Activated CD4-positive, alpha-beta memory T cell treated with anti-CD3 and anti-CD28 coated beads, Interleukin-2, amount 10 ng/mL, durations not matched to agents 7 days and 5 days (primary cell): ENCODE measurements at regions of chr5 and their contacts with region 1.

Region 1: DNA sequence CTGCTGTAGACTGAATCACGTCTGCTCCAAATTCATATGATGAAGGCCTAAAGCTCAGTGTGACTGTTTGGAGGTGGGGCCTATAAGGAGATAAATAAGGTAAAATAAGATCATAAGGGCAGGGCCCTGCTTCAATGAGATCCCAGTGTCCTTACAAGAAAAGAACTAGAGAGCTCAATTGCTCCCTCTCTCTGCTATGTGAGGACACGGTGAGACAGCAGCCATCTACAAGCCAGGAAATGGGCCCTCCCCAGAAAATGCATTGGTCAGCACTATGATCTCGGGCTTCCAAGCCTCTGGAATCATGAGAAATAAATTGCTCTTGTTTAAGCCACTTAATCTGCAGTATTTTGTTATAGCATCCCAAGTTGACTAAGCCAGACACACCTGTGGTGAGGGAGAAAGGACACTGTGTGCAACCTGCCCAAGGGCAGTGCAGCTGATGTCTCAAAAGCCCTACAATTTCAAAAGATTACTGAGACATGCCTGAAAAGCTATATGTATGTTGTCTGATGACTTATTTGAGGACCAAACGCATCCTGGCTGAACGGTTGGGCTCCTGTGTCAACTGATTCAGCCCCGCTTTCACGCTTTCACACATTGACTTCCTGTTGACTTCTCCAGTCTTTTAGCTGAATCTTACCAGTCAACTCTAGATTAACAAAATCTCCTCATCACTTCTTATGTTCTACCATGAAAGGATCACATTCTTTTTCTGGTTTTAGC is 13.2 kb downstream of the GZMK start:
- DNase-seq: peak; percentile 85
- H3K4me3 Mint-ChIP-seq: no peak overlapping the region
- H3K27ac Mint-ChIP-seq: peak overlapping the region; percentile 98
- H3K4me1 Mint-ChIP-seq: peaks cover 53% of the 10 kb centered on the region
- H3K27me3 Mint-ChIP-seq: no peaks in the 10 kb centered on the region

Region 2: DNA sequence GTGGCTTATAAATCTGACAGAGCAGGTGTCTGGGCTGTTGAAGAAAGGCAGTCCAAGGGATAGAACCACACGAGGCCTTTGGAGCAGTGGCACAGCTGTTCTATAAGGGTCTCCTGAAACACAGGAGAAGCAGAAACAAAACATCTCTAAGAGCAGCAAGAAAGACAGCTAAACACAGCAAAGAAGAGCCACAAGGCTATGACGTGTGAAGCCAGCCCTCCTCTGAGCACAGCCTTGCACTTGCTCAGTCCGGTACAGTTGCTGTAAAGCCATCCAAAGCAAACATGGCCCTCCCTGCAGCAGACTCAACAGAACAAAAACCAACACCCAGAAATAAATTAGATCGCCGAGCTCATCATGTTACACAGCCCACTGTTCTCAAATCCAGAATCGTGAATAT is 15.8 kb before region 1 on chr5:
- CTCF ChIA-PET with region 1: interaction called, 31 read pairs
- POLR2A ChIA-PET with region 1: interaction called, 81 read pairs
- DNase-seq: no peak
- H3K4me3 Mint-ChIP-seq: no peak overlapping the region
- H3K27ac Mint-ChIP-seq: no peak overlapping the region
- H3K4me1 Mint-ChIP-seq: peaks cover 49% of the 10 kb centered on the region
- H3K27me3 Mint-ChIP-seq: no peaks in the 10 kb centered on the region

Region 3: GRCh38 chr5:55062039-55062779 is 25.0 kb after region 1 on chr5:
- CTCF ChIA-PET with region 1: interaction called, 25 read pairs
- POLR2A ChIA-PET with region 1: interaction called, 64 read pairs
- DNase-seq: peak; percentile 88
- H3K4me3 Mint-ChIP-seq: peak overlapping the region; percentile 73
- H3K27ac Mint-ChIP-seq: peak overlapping the region; percentile 99
- H3K4me1 Mint-ChIP-seq: peaks cover 71% of the 10 kb centered on the region
- H3K27me3 Mint-ChIP-seq: no peaks in the 10 kb centered on the region

Region 4: DNA sequence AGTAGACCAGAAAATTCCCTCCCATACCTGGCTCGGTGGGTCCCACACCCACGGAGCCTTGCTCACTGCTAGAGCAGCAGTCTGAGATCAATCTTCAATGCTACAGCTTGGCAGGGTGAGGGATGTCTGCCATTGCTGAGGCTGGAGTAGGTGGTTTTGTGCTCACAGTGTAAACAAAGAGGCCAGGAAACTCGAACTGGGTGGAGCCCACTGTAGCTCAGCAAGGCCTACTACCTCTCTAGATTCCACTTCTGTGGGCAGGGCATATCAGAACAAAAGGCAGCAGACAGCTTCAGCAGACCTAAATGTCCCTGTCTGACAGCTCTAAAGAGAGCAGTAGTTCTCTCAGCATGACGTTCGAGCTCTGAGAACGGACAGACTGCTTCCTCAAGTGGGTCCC is 59.7 kb after region 1 on chr5:
- CTCF ChIA-PET with region 1: interaction called, 6 read pairs
- POLR2A ChIA-PET with region 1: interaction called, 50 read pairs
- DNase-seq: peak; percentile 76
- H3K4me3 Mint-ChIP-seq: peak overlapping the region; percentile 38
- H3K27ac Mint-ChIP-seq: peak overlapping the region; percentile 92
- H3K4me1 Mint-ChIP-seq: peaks cover 84% of the 10 kb centered on the region
- H3K27me3 Mint-ChIP-seq: peaks cover 2% of the 10 kb centered on the region

Region 5: DNA sequence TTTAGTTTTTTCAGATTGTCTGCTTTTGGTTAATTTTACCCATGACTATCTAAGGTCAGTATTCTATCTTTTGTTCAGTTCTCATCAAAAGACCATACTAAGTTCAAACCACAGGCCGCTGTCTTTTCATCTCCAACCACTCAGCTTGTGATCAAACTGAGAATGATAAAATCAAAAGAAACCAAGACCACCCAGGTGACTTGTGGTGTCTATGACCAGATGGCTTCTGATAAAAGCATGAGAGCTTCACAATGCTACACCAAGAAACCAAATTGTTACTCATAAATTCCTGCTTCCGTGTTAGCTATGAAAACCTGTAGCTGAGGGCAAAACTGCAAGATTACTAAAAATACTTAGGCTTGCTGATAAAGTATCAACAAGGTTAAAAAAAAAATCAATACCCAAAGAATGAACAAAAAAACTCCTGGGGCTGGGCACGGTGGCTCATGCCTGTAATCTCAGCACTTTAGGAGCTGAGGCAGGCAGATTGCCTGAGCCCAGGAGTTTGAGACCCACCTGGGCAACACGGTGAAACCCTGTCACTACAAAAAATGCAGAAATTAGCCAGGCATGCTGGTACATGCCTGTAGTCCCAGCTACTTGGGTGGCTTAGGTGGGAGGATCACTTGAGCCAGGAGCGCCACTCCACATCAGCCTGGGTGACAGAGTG is 97.0 kb after region 1 on chr5:
- CTCF ChIA-PET with region 1: no interaction called
- POLR2A ChIA-PET with region 1: interaction called, 10 read pairs
- DNase-seq: peak; percentile 30
- H3K4me3 Mint-ChIP-seq: no peak overlapping the region
- H3K27ac Mint-ChIP-seq: peak overlapping the region; percentile 62
- H3K4me1 Mint-ChIP-seq: peaks cover 17% of the 10 kb centered on the region
- H3K27me3 Mint-ChIP-seq: peaks cover 25% of the 10 kb centered on the region

Region 6: DNA sequence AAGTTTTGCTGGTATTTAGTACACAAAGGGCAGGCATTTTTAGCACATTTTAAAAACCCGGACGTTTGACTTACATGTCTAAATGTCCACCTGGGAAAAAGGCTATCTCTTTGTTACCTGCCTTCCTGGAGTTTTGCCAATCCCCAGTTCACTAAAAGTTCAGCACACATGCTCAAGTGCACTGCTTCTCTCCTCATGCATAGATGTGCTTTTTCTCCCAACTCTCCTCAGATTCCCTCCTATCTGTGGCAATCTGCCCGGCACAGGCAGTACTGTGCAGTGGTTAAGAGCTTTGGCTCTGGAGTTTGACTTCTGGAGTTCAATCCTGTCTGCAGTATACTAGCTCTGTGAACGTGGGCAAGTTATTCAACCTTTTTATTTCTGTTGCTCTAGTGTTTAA is 204.5 kb after region 1 on chr5:
- CTCF ChIA-PET with region 1: no interaction called
- POLR2A ChIA-PET with region 1: no interaction called
- DNase-seq: no peak
- H3K4me3 Mint-ChIP-seq: no peak overlapping the region
- H3K27ac Mint-ChIP-seq: no peak overlapping the region
- H3K4me1 Mint-ChIP-seq: no peaks in the 10 kb centered on the region
- H3K27me3 Mint-ChIP-seq: peaks cover 44% of the 10 kb centered on the region

Region 7: DNA sequence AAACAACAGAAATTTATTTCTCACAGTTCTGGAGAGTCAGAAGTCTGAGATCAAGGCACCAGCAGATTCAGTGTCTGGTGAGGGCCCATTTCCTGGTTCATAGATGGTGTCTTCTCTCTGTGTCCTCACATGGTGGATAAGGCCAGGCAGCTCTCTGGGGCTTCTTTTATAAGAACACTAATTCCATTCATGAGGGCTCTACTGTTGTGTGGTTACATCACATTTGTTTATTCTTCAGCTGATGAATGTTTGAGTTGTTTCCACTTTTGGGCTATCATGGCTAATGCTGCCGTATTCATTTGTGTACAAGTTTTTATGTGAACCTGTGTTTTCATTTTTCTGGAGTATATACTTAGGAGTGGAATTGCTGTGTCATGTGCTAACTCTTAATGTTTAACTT is 735.8 kb after region 1 on chr5:
- CTCF ChIA-PET with region 1: no interaction called
- POLR2A ChIA-PET with region 1: no interaction called
- DNase-seq: no peak
- H3K4me3 Mint-ChIP-seq: no peak overlapping the region
- H3K27ac Mint-ChIP-seq: no peak overlapping the region
- H3K4me1 Mint-ChIP-seq: peaks cover 17% of the 10 kb centered on the region
- H3K27me3 Mint-ChIP-seq: peaks cover 6% of the 10 kb centered on the region